ENCODE measurements at regions of chr6 and their contacts with region 1.

Region 1: DNA sequence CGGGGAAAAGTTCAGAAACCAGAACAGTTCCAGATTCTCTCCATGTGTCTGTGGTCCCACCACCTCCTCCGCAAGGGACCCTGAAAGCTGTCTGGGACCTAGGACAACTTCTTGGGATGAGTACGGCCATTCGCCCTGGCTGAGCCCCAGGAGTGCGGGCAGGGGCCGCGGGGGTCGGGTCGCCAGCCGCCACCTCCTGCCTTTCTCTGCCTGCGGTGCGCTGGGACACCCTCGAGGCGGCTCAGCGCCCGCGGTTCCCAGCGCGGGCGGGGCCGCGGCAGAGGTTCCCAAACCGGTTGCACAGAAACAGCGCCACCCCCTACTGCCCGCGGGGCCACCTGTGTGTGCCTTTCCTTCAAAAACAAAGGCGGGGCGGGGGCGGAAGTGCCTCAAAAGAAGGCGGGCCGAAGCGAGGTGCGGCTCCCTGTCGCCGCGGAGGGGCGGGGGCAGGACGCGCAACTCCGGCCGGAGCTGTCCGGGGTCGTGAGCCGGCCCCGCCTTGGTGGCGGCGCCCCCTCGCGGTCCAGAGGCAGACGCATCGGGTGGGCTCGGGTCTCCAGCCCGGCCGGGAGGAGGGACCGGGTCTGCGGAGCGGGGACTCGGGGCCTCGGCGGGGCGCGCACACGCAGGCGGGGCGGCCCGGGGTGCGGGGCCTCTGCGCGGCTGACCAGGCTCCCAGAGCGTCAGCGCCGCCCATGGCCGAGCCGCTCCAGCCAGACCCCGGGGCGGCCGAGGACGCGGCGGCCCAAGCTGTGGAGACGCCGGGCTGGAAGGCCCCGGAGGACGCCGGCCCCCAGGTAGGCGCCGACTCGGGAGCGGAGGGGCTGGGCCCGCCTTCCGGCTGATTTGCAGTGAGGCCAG is at the start of gene HEBP2:
- DNase-seq: peak; percentile 92 to 97
- H3K4me3 ChIP-seq: peak within 1 kb of the TSS; percentile 57 to 86 (median 82)
- H3K27ac ChIP-seq: peak within 1 kb of the TSS; percentile 77
- H3K4me1 ChIP-seq: peaks cover 0 to 3% (median 0%) of the 10 kb centered on the region in 4 experiments; a peak in 3 of 7 replicates
- H3K27me3 ChIP-seq: no peaks in the 10 kb centered on the region; a peak in 1 of 7 replicates
- CTCF ChIP-seq: peak; percentile 79 to 83 (median 80)
- EP300 ChIP-seq: peak; percentile 25 to 92; a peak in 2 of 3 replicates
- POLR2A ChIP-seq: peak in 1 of 2 experiments; percentile 79; a peak in 2 of 3 replicates
- RAD21 ChIP-seq: peak; percentile 78 to 80
- total RNA-seq, gene HEBP2: 37.9 and 42.8 TPM in 2 replicates

Region 2: GRCh38 chr6:138323821-138324220 is 80.2 kb before region 1 on chr6:
- CTCF ChIA-PET with region 1: no interaction called
- POLR2A ChIA-PET with region 1: no interaction called
- DNase-seq: no peak
- H3K4me3 ChIP-seq: no peak overlapping the region
- H3K27ac ChIP-seq: no peak overlapping the region
- H3K4me1 ChIP-seq: no peaks in the 10 kb centered on the region
- H3K27me3 ChIP-seq: no peaks in the 10 kb centered on the region
- CTCF ChIP-seq: no peak
- EP300 ChIP-seq: no peak
- POLR2A ChIP-seq: no peak
- RAD21 ChIP-seq: no peak

Region 3: GRCh38 chr6:138415125-138415524 is 11.1 kb after region 1 on chr6:
- CTCF ChIA-PET with region 1: interaction called, 5 read pairs
- POLR2A ChIA-PET with region 1: interaction called, 12 read pairs
- DNase-seq: no peak
- H3K4me3 ChIP-seq: no peak overlapping the region
- H3K27ac ChIP-seq: no peak overlapping the region
- H3K4me1 ChIP-seq: no peaks in the 10 kb centered on the region
- H3K27me3 ChIP-seq: no peaks in the 10 kb centered on the region
- CTCF ChIP-seq: no peak
- EP300 ChIP-seq: no peak
- POLR2A ChIP-seq: no peak
- RAD21 ChIP-seq: no peak

Region 4: DNA sequence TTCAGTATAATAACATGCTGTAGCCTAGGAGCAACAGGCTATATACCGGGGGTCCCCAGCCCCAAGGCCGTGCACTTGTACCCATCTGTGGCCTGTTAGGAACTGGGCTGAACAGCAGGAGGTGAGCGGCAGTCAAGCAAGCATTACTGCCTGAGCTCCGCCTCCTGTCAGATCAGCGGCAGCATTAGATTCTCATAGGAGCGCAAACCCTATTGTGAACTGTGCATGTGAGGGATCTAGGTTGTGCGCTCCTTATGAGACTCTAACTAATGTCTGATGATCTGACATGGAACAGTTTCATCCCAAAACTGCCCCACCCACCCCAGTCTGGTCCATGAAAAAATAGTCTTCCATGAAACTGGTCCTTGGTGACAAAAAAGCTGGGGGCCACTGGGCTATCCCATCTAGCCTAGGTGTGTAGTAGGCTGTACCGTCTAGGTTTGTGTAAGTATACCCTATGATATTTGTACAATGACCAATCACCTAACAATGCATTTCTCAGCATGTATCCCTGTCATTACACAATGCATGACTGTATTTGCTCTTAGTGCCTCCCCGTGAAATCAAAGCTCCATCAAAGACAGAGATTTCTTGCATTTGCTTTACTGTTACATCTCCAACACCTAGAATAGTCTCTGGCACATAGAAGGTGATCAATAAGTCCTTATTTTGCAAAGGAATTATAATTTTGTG is 64.4 kb after region 1 on chr6:
- CTCF ChIA-PET with region 1: no interaction called
- POLR2A ChIA-PET with region 1: no interaction called
- DNase-seq: no peak
- H3K4me3 ChIP-seq: no peak overlapping the region
- H3K27ac ChIP-seq: no peak overlapping the region
- H3K4me1 ChIP-seq: no peaks in the 10 kb centered on the region; a peak in 1 of 7 replicates
- H3K27me3 ChIP-seq: no peaks in the 10 kb centered on the region
- CTCF ChIP-seq: no peak
- EP300 ChIP-seq: no peak
- POLR2A ChIP-seq: no peak
- RAD21 ChIP-seq: no peak

Measured in H1 (cell line).